Heart left ventricle (tissue), 16 donors: ENCODE measurements at regions of chr7 and their contacts with region 1.

Region 1: GRCh38 chr7:87876040-87876868 is at the starts of genes DBF4 and SLC25A40:
- DNase-seq: peak; percentile 95 to 97 (median 96)
- ATAC-seq: peak; percentile 92 to 99 (median 98)
- H3K4me3 ChIP-seq: peak within 1 kb of the TSS; percentile 62 to 94 (median 76)
- H3K27ac ChIP-seq: peak within 1 kb of the TSS; percentile 60 to 94 (median 91)
- H3K4me1 ChIP-seq: peaks cover 0 to 48% (median 18%) of the 10 kb centered on the region in 12 donors
- H3K27me3 ChIP-seq: no peaks in the 10 kb centered on the region
- CTCF ChIP-seq: peak in 1 of 12 donors; percentile 10
- POLR2A ChIP-seq: peak in 1 of 2 donors; percentile 49
- total RNA-seq, gene DBF4: 1.0 to 7.8 (median 2.8) TPM
- total RNA-seq, gene SLC25A40: 11.0 to 29.1 (median 22.6) TPM

Region 2: GRCh38 chr7:87345166-87345927 is 530.9 kb before region 1 on chr7 and contains the start of gene CROT:
- intact Hi-C with region 1: loop called in 2 of 10 experiments (anchors 5 to 10 kb)
- DNase-seq: peak; percentile 97 to 99 (median 98)
- ATAC-seq: peak; percentile 100
- H3K4me3 ChIP-seq: peak within 1 kb of the TSS; percentile 48 to 92 (median 73)
- H3K27ac ChIP-seq: peak within 1 kb of the TSS; percentile 29 to 92 (median 84)
- H3K4me1 ChIP-seq: peaks cover 0 to 33% (median 13%) of the 10 kb centered on the region in 12 donors
- H3K27me3 ChIP-seq: no peaks in the 10 kb centered on the region
- CTCF ChIP-seq: peak in 2 of 12 donors; percentile 2 to 12
- POLR2A ChIP-seq: peak in 1 of 2 donors; percentile 92
- total RNA-seq, gene CROT: 6.8 to 10.2 (median 9.1) TPM

Region 3: GRCh38 chr7:87628780-87629569 is 247.3 kb before region 1 on chr7:
- intact Hi-C with region 1: loop called in 2 of 10 experiments (anchors 10 kb)
- DNase-seq: peak in 4 of 5 donors; percentile 14 to 64 (median 34)
- ATAC-seq: peak in 3 of 4 donors; percentile 8 to 40 (median 29)
- H3K4me3 ChIP-seq: peak overlapping the region; percentile 39 to 73 (median 63)
- H3K27ac ChIP-seq: peak overlapping the region in 5 of 12 donors; percentile 12 to 46 (median 35)
- H3K4me1 ChIP-seq: peaks cover 0 to 22% (median 3%) of the 10 kb centered on the region in 12 donors
- H3K27me3 ChIP-seq: peaks cover 0 to 16% (median 0%) of the 10 kb centered on the region in 9 donors
- CTCF ChIP-seq: no peak
- POLR2A ChIP-seq: no peak

Region 4: GRCh38 chr7:87797798-87798403 is 78.4 kb before region 1 on chr7:
- intact Hi-C with region 1: loop called in 1 of 10 experiments (anchors 10 kb)
- DNase-seq: no peak
- ATAC-seq: peak in 2 of 4 donors; percentile 34 to 41
- H3K4me3 ChIP-seq: no peak overlapping the region
- H3K27ac ChIP-seq: no peak overlapping the region
- H3K4me1 ChIP-seq: no peaks in the 10 kb centered on the region
- H3K27me3 ChIP-seq: no peaks in the 10 kb centered on the region
- CTCF ChIP-seq: peak; percentile 37 to 70 (median 52)
- POLR2A ChIP-seq: no peak

Region 5: GRCh38 chr7:88111136-88111743 is 235.0 kb after region 1 on chr7:
- intact Hi-C with region 1: loop called in 4 of 10 experiments (anchors 2 to 10 kb)
- DNase-seq: no peak
- ATAC-seq: peak in 1 of 4 donors; percentile 53
- H3K4me3 ChIP-seq: no peak overlapping the region
- H3K27ac ChIP-seq: no peak overlapping the region
- H3K4me1 ChIP-seq: peaks cover 0 to 13% (median 2%) of the 10 kb centered on the region in 12 donors
- H3K27me3 ChIP-seq: no peaks in the 10 kb centered on the region
- CTCF ChIP-seq: peak; percentile 36 to 76 (median 62)
- POLR2A ChIP-seq: no peak

Region 6: GRCh38 chr7:88219781-88220747 is 343.8 kb after region 1 on chr7 and contains the start of gene SRI:
- intact Hi-C with region 1: loop called in 1 of 10 experiments (anchors 5 kb)
- DNase-seq: peak; percentile 87 to 93 (median 88)
- ATAC-seq: peak; percentile 88 to 100 (median 98)
- H3K4me3 ChIP-seq: peak within 1 kb of the TSS; percentile 69 to 98 (median 90)
- H3K27ac ChIP-seq: peak within 1 kb of the TSS; percentile 64 to 96 (median 89)
- H3K4me1 ChIP-seq: peaks cover 0 to 26% (median 14%) of the 10 kb centered on the region in 12 donors
- H3K27me3 ChIP-seq: no peaks in the 10 kb centered on the region
- CTCF ChIP-seq: peak; percentile 77 to 98 (median 94)
- POLR2A ChIP-seq: peak in 1 of 2 donors; percentile 81
- total RNA-seq, gene SRI: 48.9 to 88.5 (median 69.4) TPM